Body of pancreas (tissue), 4 donors: ENCODE measurements at regions of chr11 and their contacts with region 1.

Region 1: DNA sequence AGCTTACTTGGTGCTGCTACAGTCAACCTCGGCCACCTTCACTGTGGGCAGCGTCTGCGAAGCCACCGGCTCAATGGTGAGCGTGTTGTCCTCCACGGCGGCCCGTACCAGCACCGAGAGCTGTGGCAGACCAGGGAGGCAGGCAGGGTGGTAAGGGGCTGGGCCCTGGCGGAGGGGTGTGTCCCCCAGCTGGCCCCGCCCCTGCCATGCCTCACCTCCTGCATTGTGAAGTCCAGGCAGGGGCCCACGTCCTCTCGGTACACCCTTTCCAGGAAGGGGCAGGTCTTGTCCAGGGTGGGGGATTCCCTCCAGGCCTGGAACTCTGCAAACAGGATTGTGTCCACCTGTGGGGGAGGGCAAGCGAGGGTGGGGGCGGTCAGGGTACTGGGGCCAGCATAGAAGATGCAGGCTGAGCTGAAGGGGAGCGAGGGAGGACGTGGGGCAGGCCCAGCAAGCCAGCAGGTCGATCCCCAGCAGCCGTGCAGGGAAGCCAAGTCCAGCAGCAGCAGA is 12.8 kb downstream of the RAB3IL1 start:
- DNase-seq: peak; percentile 75 to 86 (median 80)
- ATAC-seq: peak; percentile 94
- H3K4me3 ChIP-seq: no peak overlapping the region
- H3K27ac ChIP-seq: peak overlapping the region in 3 of 4 donors; percentile 16 to 58 (median 46)
- H3K4me1 ChIP-seq: no peaks in the 10 kb centered on the region
- H3K27me3 ChIP-seq: no peaks in the 10 kb centered on the region
- CTCF ChIP-seq: no peak
- POLR2A ChIP-seq: peak in 2 of 3 donors; percentile 32 to 34

Region 2: GRCh38 chr11:61947486-61948210 is 43.1 kb after region 1 on chr11:
- intact Hi-C with region 1: loop called (anchors 5 kb)
- DNase-seq: peak; percentile 87 to 91 (median 90)
- ATAC-seq: peak; percentile 80
- H3K4me3 ChIP-seq: no peak overlapping the region
- H3K27ac ChIP-seq: no peak overlapping the region
- H3K4me1 ChIP-seq: peaks cover 29% of the 10 kb centered on the region
- H3K27me3 ChIP-seq: no peaks in the 10 kb centered on the region
- CTCF ChIP-seq: peak; percentile 70 to 97 (median 94)
- POLR2A ChIP-seq: no peak

Region 3: DNA sequence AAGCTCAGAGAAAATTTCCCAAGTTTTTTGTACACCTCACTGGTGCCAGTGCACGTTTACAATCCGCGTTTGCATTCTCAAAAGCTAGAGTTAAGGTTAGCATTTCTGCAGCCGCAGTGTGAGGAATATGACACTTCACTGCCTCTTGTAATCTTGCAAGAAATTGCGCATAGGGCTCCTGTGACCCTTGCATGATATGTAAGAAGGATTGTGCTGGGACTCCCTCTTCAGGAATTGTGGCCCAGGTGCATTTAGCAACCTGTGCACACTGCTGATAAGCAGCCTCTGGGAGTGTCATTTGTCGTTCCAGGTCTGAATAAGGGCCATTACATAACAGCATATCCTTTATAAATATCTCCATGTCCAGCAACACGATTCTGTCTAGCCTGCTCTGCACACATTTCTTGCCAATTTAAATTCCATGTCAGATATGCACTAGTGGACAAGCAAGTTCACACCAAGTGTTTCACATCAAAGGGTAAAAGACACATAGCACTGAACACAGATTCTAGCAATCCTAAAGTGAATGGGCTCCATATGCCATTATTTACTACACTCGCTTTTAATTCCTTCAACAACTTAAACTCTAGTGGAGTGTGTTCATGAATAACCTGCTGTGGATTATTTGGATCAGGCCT is 150.0 kb after region 1 on chr11:
- intact Hi-C with region 1: loop called (anchors 5 kb)
- DNase-seq: peak; percentile 46 to 64 (median 56)
- ATAC-seq: peak; percentile 50
- H3K4me3 ChIP-seq: no peak overlapping the region
- H3K27ac ChIP-seq: no peak overlapping the region
- H3K4me1 ChIP-seq: no peaks in the 10 kb centered on the region
- H3K27me3 ChIP-seq: no peaks in the 10 kb centered on the region
- CTCF ChIP-seq: peak in 6 of 7 experiments; percentile 6 to 70 (median 50)
- POLR2A ChIP-seq: no peak